MCF 10A (cell line): ENCODE measurements at regions of chr5 and their contacts with region 1.

Region 1: DNA sequence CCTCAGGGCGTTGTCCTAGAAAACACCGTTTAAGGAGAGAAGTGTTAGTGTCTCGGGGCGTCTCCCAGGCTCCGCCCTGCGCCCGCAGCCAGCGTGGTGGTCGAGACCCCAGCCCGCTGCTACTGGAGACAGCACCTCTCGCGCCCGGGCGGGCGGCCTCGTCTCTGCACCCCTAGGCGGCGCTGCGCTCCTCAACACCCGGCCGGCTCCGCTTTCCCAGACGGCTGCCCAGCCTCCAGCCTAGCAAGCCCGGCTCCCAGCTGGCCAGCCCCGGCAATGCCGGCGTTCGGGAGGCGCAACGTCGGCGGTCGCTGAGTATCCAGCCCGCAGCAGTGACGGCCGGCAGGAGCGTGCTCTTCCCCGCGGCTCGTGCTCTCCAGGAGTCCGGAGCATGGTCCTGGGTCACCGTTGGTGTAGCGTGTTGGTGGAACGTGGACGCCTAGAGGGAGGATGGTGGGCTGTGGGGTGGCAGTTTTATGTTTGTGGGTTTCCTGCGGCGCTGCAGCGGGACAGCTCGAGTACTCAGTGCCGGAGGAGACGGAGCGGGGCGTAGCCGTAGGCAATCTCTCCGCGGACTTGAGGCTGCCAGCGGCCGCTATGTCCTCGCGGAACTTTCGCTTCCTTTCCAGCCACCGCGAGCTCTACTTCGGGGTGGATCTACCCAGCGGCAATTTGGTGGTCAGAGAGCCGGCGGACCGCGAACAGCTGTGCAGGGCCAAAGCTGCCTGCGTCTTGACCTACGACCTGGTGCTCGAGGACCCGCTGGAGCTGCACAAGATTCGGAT is 536 bp downstream of the PCDHAC1 start:
- DNase-seq: peak; percentile 92
- H3K4me3 Mint-ChIP-seq: peak overlapping the region; percentile 95
- H3K27ac Mint-ChIP-seq: peak overlapping the region; percentile 85
- H3K4me1 Mint-ChIP-seq: peaks cover 31% of the 10 kb centered on the region
- H3K27me3 Mint-ChIP-seq: no peaks in the 10 kb centered on the region
- CTCF ChIP-seq: peak; percentile 98

Region 2: GRCh38 chr5:140806834-140807775 is 119.5 kb before region 1 on chr5 and contains the start of gene PCDHA4:
- CTCF ChIA-PET with region 1: interaction called, 12 read pairs
- POLR2A ChIA-PET with region 1: interaction called, 11 read pairs
- intact Hi-C with region 1: no loop called
- DNase-seq: peak; percentile 18
- H3K4me3 Mint-ChIP-seq: peak within 1 kb of the TSS; percentile 55
- H3K27ac Mint-ChIP-seq: no peak within 1 kb of the TSS
- H3K4me1 Mint-ChIP-seq: no peaks in the 10 kb centered on the region
- H3K27me3 Mint-ChIP-seq: no peaks in the 10 kb centered on the region
- CTCF ChIP-seq: peak; percentile 38
- total RNA-seq, gene PCDHA4: 0.16 and 0.49 TPM in 2 replicates

Region 3: DNA sequence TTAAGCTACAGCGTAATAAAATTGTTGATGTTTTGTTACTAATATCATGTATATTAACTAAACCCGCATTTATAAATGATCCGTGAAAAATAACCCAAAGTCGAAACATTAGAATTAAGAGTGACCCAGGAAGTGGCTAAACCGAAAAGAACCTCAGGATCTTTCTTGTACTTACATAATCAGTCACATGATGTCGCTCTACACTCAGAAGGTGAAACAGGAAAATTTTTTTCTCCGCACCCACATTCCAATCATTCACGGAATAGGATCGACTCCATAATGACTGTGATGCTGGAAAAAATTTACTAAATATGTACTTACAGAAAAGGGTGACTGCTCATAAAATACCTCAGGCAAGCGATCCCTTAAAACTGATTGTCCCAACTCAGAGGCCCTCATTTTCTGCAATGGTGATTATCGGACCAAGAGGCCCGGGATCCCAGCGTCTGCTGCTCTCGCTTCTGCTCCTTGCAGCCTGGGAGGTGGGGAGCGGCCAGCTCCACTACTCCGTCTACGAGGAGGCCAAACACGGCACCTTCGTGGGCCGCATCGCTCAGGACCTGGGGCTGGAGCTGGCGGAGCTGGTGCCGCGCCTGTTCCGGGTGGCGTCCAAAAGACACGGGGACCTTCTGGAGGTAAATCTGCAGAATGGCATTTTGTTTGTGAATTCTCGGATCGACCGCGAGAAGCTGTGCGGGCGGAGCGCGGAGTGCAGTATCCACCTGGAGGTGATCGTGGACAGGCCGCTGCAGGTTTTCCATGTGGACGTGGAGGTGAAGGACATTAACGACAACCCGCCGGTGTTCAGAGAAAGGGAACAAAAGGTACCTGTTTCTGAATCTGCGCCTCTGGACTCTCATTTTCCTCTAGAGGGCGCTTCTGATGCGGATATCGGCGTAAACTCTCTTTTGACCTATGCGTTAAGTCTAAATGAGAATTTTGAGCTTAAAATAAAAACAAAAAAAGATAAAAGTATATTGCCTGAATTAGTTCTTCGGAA is 51.3 kb before region 1 on chr5 and contains the start of gene PCDHA12:
- CTCF ChIA-PET with region 1: interaction called, 80 read pairs
- POLR2A ChIA-PET with region 1: interaction called, 59 read pairs
- intact Hi-C with region 1: loop called (anchors 1 kb)
- DNase-seq: peak; percentile 76
- H3K4me3 Mint-ChIP-seq: peak within 1 kb of the TSS; percentile 86
- H3K27ac Mint-ChIP-seq: peak within 1 kb of the TSS; percentile 92
- H3K4me1 Mint-ChIP-seq: peaks cover 4% of the 10 kb centered on the region
- H3K27me3 Mint-ChIP-seq: no peaks in the 10 kb centered on the region
- CTCF ChIP-seq: peak; percentile 68
- total RNA-seq, gene PCDHA12: 6.1 and 9.6 TPM in 2 replicates

Region 4: GRCh38 chr5:140953234-140953633 is 26.6 kb after region 1 on chr5:
- CTCF ChIA-PET with region 1: interaction called, 23 read pairs
- POLR2A ChIA-PET with region 1: interaction called, 37 read pairs
- intact Hi-C with region 1: loop called (anchors 2 kb)
- DNase-seq: no peak
- H3K4me3 Mint-ChIP-seq: no peak overlapping the region
- H3K27ac Mint-ChIP-seq: no peak overlapping the region
- H3K4me1 Mint-ChIP-seq: peaks cover 20% of the 10 kb centered on the region
- H3K27me3 Mint-ChIP-seq: no peaks in the 10 kb centered on the region
- CTCF ChIP-seq: no peak

Region 5: GRCh38 chr5:140977003-140977402 is 50.4 kb after region 1 on chr5:
- CTCF ChIA-PET with region 1: interaction called, 39 read pairs
- POLR2A ChIA-PET with region 1: interaction called, 50 read pairs
- intact Hi-C with region 1: loop called (anchors 1 kb)
- DNase-seq: peak; percentile 86
- H3K4me3 Mint-ChIP-seq: peak overlapping the region; percentile 32
- H3K27ac Mint-ChIP-seq: peak overlapping the region; percentile 94
- H3K4me1 Mint-ChIP-seq: peaks cover 37% of the 10 kb centered on the region
- H3K27me3 Mint-ChIP-seq: no peaks in the 10 kb centered on the region
- CTCF ChIP-seq: no peak

Region 6: GRCh38 chr5:141010047-141010791 is 83.6 kb after region 1 on chr5:
- CTCF ChIA-PET with region 1: interaction called, 74 read pairs
- POLR2A ChIA-PET with region 1: interaction called, 3 read pairs
- intact Hi-C with region 1: no loop called
- DNase-seq: no peak
- H3K4me3 Mint-ChIP-seq: no peak overlapping the region
- H3K27ac Mint-ChIP-seq: no peak overlapping the region
- H3K4me1 Mint-ChIP-seq: peaks cover 5% of the 10 kb centered on the region
- H3K27me3 Mint-ChIP-seq: no peaks in the 10 kb centered on the region
- CTCF ChIP-seq: no peak

Region 7: DNA sequence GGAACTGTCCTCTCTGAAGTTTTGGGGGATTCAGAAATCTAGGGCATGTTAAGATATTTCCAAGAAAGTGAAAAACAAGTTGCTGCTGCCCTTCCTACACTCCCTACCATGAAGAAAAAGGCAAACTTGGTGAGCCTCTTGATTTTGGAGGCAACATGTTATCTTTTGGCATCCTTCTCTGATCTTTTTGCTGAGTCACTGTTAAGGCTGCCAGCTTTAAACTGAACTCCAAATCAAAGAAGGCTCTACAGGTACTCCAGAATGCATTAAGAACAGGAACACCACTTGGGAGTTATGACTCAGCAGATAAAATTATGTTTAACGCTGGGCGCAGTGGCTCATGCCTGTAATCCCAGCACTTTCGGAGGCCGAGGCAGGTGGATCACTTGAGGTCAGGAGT is 342.6 kb after region 1 on chr5:
- CTCF ChIA-PET with region 1: no interaction called
- POLR2A ChIA-PET with region 1: no interaction called
- intact Hi-C with region 1: no loop called
- DNase-seq: no peak
- H3K4me3 Mint-ChIP-seq: no peak overlapping the region
- H3K27ac Mint-ChIP-seq: no peak overlapping the region
- H3K4me1 Mint-ChIP-seq: no peaks in the 10 kb centered on the region
- H3K27me3 Mint-ChIP-seq: no peaks in the 10 kb centered on the region
- CTCF ChIP-seq: no peak

Region 8: GRCh38 chr5:142403571-142403971 is 1476.9 kb after region 1 on chr5:
- CTCF ChIA-PET with region 1: no interaction called
- POLR2A ChIA-PET with region 1: no interaction called
- intact Hi-C with region 1: no loop called
- DNase-seq: no peak
- H3K4me3 Mint-ChIP-seq: no peak overlapping the region
- H3K27ac Mint-ChIP-seq: no peak overlapping the region
- H3K4me1 Mint-ChIP-seq: no peaks in the 10 kb centered on the region
- H3K27me3 Mint-ChIP-seq: no peaks in the 10 kb centered on the region
- CTCF ChIP-seq: no peak